Dorsolateral prefrontal cortex (tissue), 120 donors: ENCODE measurements at regions of chr14 and their contacts with region 1.

Region 1: GRCh38 chr14:70972107-70972976 is 65.1 kb downstream of the PCNX1 start:
- DNase-seq: peak; percentile 35 to 94 (median 80)
- H3K4me3 ChIP-seq: no peak overlapping the region
- H3K27ac ChIP-seq: peak overlapping the region in 1 of 59 donors; percentile 17
- H3K27me3 ChIP-seq: no peaks in the 10 kb centered on the region
- CTCF ChIP-seq: peak; percentile 86 to 100 (median 94)

Region 2: GRCh38 chr14:70816525-70816924 is 155.8 kb before region 1 on chr14:
- intact Hi-C with region 1: loop called (anchors 5 kb)
- DNase-seq: no peak
- H3K4me3 ChIP-seq: no peak overlapping the region
- H3K27ac ChIP-seq: no peak overlapping the region
- H3K27me3 ChIP-seq: peaks cover 0 to 25% (median 0%) of the 10 kb centered on the region in 45 donors
- CTCF ChIP-seq: no peak

Region 3: DNA sequence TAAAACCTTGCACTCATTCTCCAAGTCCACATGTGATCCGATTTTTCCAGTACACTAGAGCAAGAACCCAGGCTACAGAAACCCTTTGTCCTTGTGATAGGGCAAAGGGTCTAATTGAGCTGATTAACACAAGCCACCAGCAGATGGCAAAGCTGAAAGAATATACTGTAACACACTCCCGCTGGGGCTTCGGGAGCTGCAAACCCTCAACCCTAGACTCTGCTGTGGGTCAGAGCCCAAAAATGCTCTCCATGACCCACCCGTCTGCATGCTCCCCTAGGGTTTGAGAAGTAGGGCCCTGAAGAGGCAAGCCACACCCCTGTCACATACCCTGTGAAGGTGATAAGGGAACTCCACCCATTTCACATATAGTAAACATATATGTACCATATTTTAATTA is 98.7 kb before region 1 on chr14:
- intact Hi-C with region 1: no loop called
- DNase-seq: no peak
- H3K4me3 ChIP-seq: no peak overlapping the region
- H3K27ac ChIP-seq: no peak overlapping the region
- H3K27me3 ChIP-seq: peaks cover 0 to 17% (median 0%) of the 10 kb centered on the region in 45 donors
- CTCF ChIP-seq: no peak